K562 (cell line): ENCODE measurements at regions of chr17 and their contacts with region 1.

Region 1: DNA sequence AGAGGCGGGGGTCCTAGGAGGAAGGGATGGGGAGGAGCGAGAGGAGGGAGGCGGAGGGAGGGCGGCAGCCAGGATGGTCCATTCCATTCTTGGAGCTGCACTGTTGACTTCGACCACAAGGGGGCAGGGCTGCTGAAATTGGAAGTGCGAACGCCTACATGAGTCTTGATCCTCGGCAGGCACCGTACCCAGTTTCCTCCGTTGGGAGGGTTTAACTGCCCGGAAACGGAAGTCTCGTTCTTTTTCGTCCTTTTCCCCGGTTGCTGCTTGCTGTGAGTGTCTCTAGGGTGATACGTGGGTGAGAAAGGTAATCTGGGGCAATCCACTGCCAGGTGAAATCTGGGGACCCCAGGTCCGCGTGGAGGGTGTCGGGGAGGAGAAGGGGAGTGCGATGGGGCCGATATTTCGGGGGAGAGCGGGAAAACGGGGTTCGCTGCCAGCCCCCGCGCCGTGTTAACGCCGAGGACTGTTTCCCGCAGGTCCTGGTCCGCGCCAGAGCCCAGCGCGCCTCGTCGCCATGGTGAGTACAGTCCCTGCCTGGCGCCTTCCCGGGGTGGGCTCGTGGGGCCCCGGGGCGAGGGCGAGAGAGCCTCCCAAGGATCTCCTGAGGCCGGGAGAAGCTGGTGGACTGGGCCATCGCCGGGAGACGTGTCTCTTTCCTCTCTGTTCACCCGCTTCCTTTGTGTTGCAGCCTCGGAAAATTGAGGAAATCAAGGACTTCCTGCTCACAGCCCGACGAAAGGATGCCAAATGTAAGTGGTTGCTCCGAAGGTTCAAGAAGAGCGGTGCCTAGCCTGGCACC is at the start of gene RPL38:
- DNase-seq: peak; percentile 86 to 97 (median 90)
- ATAC-seq: peak; percentile 77
- H3K4me3 ChIP-seq: peak within 1 kb of the TSS; percentile 75
- H3K27ac ChIP-seq: peak within 1 kb of the TSS; percentile 82
- H3K4me1 ChIP-seq: peaks cover 11 to 18% of the 10 kb centered on the region in 2 experiments; a peak in 4 of 5 replicates
- H3K27me3 ChIP-seq: peaks cover 23 to 34% of the 10 kb centered on the region in 2 experiments
- CTCF ChIP-seq: peak; percentile 88 to 98 (median 97)
- EP300 ChIP-seq: peak; percentile 65; the same call in 1 of the 2 replicates
- POLR2A ChIP-seq: peak; percentile 99
- RAD21 ChIP-seq: peak; percentile 51 to 66
- polyA plus RNA-seq, gene RPL38: 1,939 to 2,988 TPM

Region 2: GRCh38 chr17:74089869-74090464 is 113.7 kb before region 1 on chr17:
- CTCF ChIA-PET with region 1: no interaction called
- POLR2A ChIA-PET with region 1: no interaction called
- in situ Hi-C with region 1: no loop called
- intact Hi-C with region 1: loop called (anchors 2 kb)
- DNase-seq: peak; percentile 62 to 71 (median 69)
- ATAC-seq: peak; percentile 90
- H3K4me3 ChIP-seq: no peak overlapping the region
- H3K27ac ChIP-seq: no peak overlapping the region
- H3K4me1 ChIP-seq: no peaks in the 10 kb centered on the region
- H3K27me3 ChIP-seq: peaks cover 0 to 5% of the 10 kb centered on the region in 2 experiments; a peak in 2 of 5 replicates
- CTCF ChIP-seq: peak; percentile 69 to 83 (median 78)
- EP300 ChIP-seq: no peak
- POLR2A ChIP-seq: no peak
- RAD21 ChIP-seq: peak in 1 of 2 experiments; percentile 75; a peak in 2 of 4 replicates

Region 3: GRCh38 chr17:74190172-74190571 is 13.5 kb before region 1 on chr17:
- CTCF ChIA-PET with region 1: no interaction called
- POLR2A ChIA-PET with region 1: interaction called, 12 read pairs
- in situ Hi-C with region 1: no loop called
- intact Hi-C with region 1: no loop called
- DNase-seq: peak; percentile 41 to 84 (median 80)
- ATAC-seq: peak; percentile 99
- H3K4me3 ChIP-seq: no peak overlapping the region
- H3K27ac ChIP-seq: no peak overlapping the region
- H3K4me1 ChIP-seq: no peaks in the 10 kb centered on the region
- H3K27me3 ChIP-seq: peaks cover 12 to 49% of the 10 kb centered on the region in 2 experiments; a peak in 4 of 5 replicates
- CTCF ChIP-seq: no peak
- EP300 ChIP-seq: no peak
- POLR2A ChIP-seq: no peak
- RAD21 ChIP-seq: no peak